B cell (primary cell): ENCODE measurements at regions of chr19 and their contacts with region 1.

Region 1: DNA sequence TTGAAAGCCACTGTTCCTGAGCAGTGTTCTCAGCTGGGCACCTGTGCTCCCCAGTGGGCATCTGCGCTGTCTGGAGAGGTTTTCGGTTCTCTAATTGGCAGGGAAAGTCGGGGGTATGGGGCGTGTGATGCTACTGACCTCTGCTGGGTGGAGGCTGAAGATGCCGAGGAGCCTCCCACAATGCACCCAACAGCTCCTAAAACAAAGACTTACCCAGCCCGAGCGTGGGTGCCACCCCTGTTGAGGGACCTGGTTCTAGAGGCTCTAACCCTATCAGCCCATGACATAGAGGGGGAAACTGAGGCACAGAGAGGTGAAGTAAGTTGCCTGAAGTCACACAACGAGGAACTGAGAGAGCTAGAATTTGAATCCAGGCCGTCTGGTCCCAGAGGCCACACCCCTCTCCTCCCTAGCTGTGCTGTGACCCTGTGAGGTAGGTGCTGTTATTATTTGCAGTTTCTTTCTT is 2.3 kb downstream of the SPACA4 start:
- DNase-seq: peak; percentile 87
- ATAC-seq: peak; percentile 97
- H3K4me3 ChIP-seq: peak overlapping the region in 1 of 5 experiments; percentile 25
- H3K4me3 Mint-ChIP-seq: peak overlapping the region; percentile 67
- H3K27ac ChIP-seq: peak overlapping the region in 1 of 2 donors; percentile 4
- H3K27ac Mint-ChIP-seq: peak overlapping the region; percentile 90
- H3K4me1 ChIP-seq: peaks cover 0 to 8% of the 10 kb centered on the region in 2 donors
- H3K4me1 Mint-ChIP-seq: peaks cover 6% of the 10 kb centered on the region
- H3K27me3 ChIP-seq: no peaks in the 10 kb centered on the region
- H3K27me3 Mint-ChIP-seq: no peaks in the 10 kb centered on the region
- CTCF ChIP-seq: peak; percentile 69

Region 2: GRCh38 chr19:48391107-48391986 is 217.5 kb before region 1 on chr19 and contains the start of gene KDELR1:
- CTCF ChIA-PET with region 1: interaction called, 8 read pairs
- POLR2A ChIA-PET with region 1: no interaction called
- intact Hi-C with region 1: loop called (anchors 2 kb)
- DNase-seq: peak; percentile 86
- ATAC-seq: peak; percentile 88
- H3K4me3 ChIP-seq: peak within 1 kb of the TSS; percentile 71 to 93 (median 85)
- H3K4me3 Mint-ChIP-seq: peak within 1 kb of the TSS; percentile 95
- H3K27ac ChIP-seq: peak within 1 kb of the TSS; percentile 79 to 80
- H3K27ac Mint-ChIP-seq: peak within 1 kb of the TSS; percentile 92
- H3K4me1 ChIP-seq: peaks cover 39 to 45% of the 10 kb centered on the region in 2 donors
- H3K4me1 Mint-ChIP-seq: peaks cover 24% of the 10 kb centered on the region
- H3K27me3 ChIP-seq: peaks cover 0 to 39% (median 23%) of the 10 kb centered on the region in 4 experiments
- H3K27me3 Mint-ChIP-seq: peaks cover 25% of the 10 kb centered on the region
- CTCF ChIP-seq: peak; percentile 88
- total RNA-seq, gene KDELR1: 60.5 and 62.7 TPM in 2 replicates

Region 3: GRCh38 chr19:48501496-48502350 is 107.1 kb before region 1 on chr19:
- CTCF ChIA-PET with region 1: interaction called, 13 read pairs
- POLR2A ChIA-PET with region 1: no interaction called
- intact Hi-C with region 1: no loop called
- DNase-seq: no peak
- ATAC-seq: peak; percentile 59
- H3K4me3 ChIP-seq: peak overlapping the region in 3 of 5 experiments; percentile 12 to 25 (median 17)
- H3K4me3 Mint-ChIP-seq: peak overlapping the region; percentile 49
- H3K27ac ChIP-seq: peak overlapping the region in 1 of 2 donors; percentile 33
- H3K27ac Mint-ChIP-seq: peak overlapping the region; percentile 24
- H3K4me1 ChIP-seq: peaks cover 33 to 35% of the 10 kb centered on the region in 2 donors
- H3K4me1 Mint-ChIP-seq: peaks cover 21% of the 10 kb centered on the region
- H3K27me3 ChIP-seq: peaks cover 0 to 36% (median 13%) of the 10 kb centered on the region in 4 experiments
- H3K27me3 Mint-ChIP-seq: peaks cover 9% of the 10 kb centered on the region
- CTCF ChIP-seq: no peak

Region 4: GRCh38 chr19:48595833-48596232 is 13.0 kb before region 1 on chr19:
- CTCF ChIA-PET with region 1: interaction called, 13 read pairs
- POLR2A ChIA-PET with region 1: no interaction called
- intact Hi-C with region 1: no loop called
- DNase-seq: no peak
- ATAC-seq: no peak
- H3K4me3 ChIP-seq: no peak overlapping the region
- H3K4me3 Mint-ChIP-seq: no peak overlapping the region
- H3K27ac ChIP-seq: no peak overlapping the region
- H3K27ac Mint-ChIP-seq: no peak overlapping the region
- H3K4me1 ChIP-seq: no peaks in the 10 kb centered on the region
- H3K4me1 Mint-ChIP-seq: peaks cover 2% of the 10 kb centered on the region
- H3K27me3 ChIP-seq: peaks cover 0 to 3% (median 0%) of the 10 kb centered on the region in 4 experiments
- H3K27me3 Mint-ChIP-seq: peaks cover 4% of the 10 kb centered on the region
- CTCF ChIP-seq: no peak

Region 5: DNA sequence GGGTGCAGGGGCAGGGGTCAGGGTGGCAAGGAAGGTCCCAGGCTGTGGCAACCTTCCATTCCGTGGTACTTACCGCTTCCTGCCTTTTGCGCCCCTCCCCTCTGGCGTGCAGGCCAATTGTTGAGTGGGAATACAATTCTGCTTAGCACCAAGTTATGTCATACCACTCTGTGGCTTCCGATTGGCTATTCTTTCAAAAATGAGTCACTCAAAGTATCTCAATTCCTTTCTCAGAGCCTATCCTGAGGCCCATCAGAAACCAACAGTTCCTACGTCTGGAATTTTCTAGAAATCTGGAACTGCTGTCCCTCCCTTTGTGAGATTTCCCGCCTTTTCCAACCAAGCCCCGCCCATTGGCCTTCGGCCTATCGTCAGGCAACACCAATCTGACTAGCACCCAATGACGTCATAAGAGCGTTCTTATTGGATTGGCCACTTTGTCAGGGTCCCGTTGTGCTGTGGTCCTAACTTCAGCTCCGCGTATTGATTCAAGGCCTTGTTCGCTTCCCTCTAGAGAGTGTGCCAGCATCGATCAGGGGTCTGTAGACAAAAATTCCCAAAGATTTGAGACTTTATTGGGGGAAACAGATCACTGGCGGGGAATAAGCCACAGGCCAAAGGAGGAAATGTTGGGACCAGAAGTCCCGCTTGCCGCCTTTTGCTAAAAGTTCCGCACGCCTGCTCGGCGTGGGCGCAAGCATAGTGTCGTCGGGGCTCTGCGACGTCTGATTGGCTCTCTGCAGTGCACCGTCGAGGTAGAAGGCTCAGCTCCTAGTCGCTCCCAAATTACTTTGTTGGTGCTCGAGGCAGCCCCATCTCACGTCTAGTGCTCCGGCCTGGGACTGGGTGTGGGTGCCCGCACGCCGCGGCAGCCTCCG is 52.3 kb after region 1 on chr19:
- CTCF ChIA-PET with region 1: no interaction called
- POLR2A ChIA-PET with region 1: no interaction called
- intact Hi-C with region 1: loop called (anchors 2 kb)
- DNase-seq: peak; percentile 94
- ATAC-seq: peak; percentile 93
- H3K4me3 ChIP-seq: peak overlapping the region in 4 of 5 experiments; percentile 30 to 56 (median 52)
- H3K4me3 Mint-ChIP-seq: peak overlapping the region; percentile 88
- H3K27ac ChIP-seq: peak overlapping the region; percentile 96 to 97
- H3K27ac Mint-ChIP-seq: peak overlapping the region; percentile 97
- H3K4me1 ChIP-seq: peaks cover 8 to 19% of the 10 kb centered on the region in 2 donors
- H3K4me1 Mint-ChIP-seq: peaks cover 16% of the 10 kb centered on the region
- H3K27me3 ChIP-seq: no peaks in the 10 kb centered on the region
- H3K27me3 Mint-ChIP-seq: no peaks in the 10 kb centered on the region
- CTCF ChIP-seq: no peak

Region 6: DNA sequence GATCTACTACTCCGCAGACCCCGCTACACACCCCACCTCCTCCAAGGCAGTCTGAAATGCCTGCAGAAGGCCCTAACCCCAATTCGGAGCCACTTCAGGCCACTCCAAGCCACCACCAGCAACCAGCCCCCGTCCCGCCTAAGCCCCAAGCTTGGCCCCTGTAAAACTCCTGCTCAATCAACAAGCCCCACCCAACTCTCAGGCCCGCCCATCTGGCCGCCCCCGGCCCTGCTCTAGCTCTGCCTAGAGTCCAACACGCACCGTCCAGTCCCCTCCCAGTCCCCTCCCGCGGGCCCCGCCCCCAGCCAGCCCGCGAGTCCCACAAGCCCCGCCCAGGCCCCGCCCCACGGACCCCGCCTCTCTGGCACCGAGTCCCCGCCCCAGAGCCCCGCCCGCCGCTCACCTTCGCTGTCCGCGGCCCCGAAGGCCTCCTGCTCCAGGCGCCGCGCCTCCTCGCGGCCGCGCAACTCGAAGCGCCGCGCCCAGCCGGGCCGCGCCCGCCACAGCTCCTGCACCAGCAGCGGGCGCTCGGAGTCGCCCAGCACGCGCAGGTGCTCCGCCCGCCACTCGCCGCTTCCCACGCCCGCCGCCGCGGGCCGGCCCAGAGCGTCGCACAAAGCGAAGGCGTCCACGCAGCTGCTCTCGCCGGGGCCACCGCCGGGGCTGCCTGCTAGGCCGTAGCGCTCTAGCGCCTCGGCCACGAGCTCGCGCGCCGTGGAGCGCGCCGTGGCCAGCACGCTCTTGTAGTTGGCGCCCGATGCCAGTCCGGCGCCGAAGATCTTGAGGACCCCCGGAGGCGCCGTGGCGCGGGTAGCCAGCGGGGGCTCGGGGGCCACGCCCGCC is 129.9 kb after region 1 on chr19:
- CTCF ChIA-PET with region 1: no interaction called
- POLR2A ChIA-PET with region 1: no interaction called
- intact Hi-C with region 1: no loop called
- DNase-seq: peak; percentile 91
- ATAC-seq: peak; percentile 93
- H3K4me3 ChIP-seq: peak overlapping the region in 3 of 5 experiments; percentile 48 to 65 (median 54)
- H3K4me3 Mint-ChIP-seq: peak overlapping the region; percentile 63
- H3K27ac ChIP-seq: no peak overlapping the region
- H3K27ac Mint-ChIP-seq: peak overlapping the region; percentile 67
- H3K4me1 ChIP-seq: peaks cover 22 to 25% of the 10 kb centered on the region in 2 donors
- H3K4me1 Mint-ChIP-seq: peaks cover 15% of the 10 kb centered on the region
- H3K27me3 ChIP-seq: peaks cover 0 to 26% (median 10%) of the 10 kb centered on the region in 4 experiments
- H3K27me3 Mint-ChIP-seq: peaks cover 15% of the 10 kb centered on the region
- CTCF ChIP-seq: peak; percentile 54